ENCODE measurements at regions of chr2 and their contacts with region 1.

Region 1: GRCh38 chr2:44392338-44392943 is 30.7 kb downstream of the CAMKMT start:
- DNase-seq: peak; percentile 6
- ATAC-seq: no peak
- H3K4me3 ChIP-seq: no peak overlapping the region
- H3K27ac ChIP-seq: no peak overlapping the region
- H3K4me1 ChIP-seq: no peaks in the 10 kb centered on the region
- H3K27me3 ChIP-seq: no peaks in the 10 kb centered on the region
- CTCF ChIP-seq: peak; percentile 56 to 79 (median 62)
- POLR2A ChIP-seq: no peak
- RAD21 ChIP-seq: peak; percentile 57

Region 2: DNA sequence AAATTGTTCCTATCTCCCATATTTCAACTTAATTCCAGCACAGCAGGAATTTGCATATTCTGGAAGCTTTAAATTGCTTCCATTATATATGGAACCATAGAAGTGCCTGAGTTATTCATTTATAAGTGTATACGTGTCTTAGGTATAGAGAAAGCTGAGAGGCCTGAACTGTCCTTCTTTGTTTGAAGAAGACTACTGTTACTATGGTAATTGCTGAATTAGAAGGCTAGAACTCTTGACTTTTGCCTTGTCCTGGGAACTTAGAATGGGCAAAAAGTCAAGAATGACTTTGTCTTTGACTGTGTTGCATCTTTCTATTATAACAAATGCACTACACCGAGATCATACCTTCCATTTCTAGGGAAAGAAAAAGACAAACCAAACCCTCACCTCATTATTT is 15.0 kb before region 1 on chr2:
- CTCF ChIA-PET with region 1: interaction called, 11 read pairs
- POLR2A ChIA-PET with region 1: no interaction called
- RAD21 ChIA-PET with region 1: no interaction called
- intact Hi-C with region 1: no loop called
- DNase-seq: no peak
- ATAC-seq: no peak
- H3K4me3 ChIP-seq: no peak overlapping the region
- H3K27ac ChIP-seq: no peak overlapping the region
- H3K4me1 ChIP-seq: no peaks in the 10 kb centered on the region
- H3K27me3 ChIP-seq: no peaks in the 10 kb centered on the region
- CTCF ChIP-seq: no peak
- POLR2A ChIP-seq: no peak
- RAD21 ChIP-seq: no peak

Region 3: DNA sequence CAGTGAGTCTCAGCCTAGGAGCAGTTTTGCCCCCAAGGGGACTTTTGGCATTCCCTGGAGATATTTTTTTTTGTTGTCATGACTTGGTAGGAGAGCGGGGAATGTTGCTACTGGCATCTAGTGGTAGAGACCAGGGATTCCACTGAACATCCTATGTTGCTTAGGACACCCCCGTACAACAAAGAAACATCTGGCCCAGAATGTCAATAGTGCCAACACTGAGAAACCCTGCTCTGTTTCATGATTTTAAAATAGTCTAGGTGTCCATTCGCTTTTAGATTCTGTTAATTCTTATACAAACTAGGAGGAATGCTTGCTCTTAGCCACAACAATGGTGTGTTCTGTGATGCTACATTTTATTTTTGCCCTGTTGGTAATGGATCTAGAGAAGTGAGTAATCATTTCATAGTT is 323.2 kb after region 1 on chr2:
- CTCF ChIA-PET with region 1: interaction called, 16 read pairs
- POLR2A ChIA-PET with region 1: no interaction called
- RAD21 ChIA-PET with region 1: interaction called in 1 of 2 experiments, 3 read pairs
- intact Hi-C with region 1: loop called (anchors 1 kb)
- DNase-seq: peak; percentile 19
- ATAC-seq: peak; percentile 85
- H3K4me3 ChIP-seq: no peak overlapping the region
- H3K27ac ChIP-seq: no peak overlapping the region
- H3K4me1 ChIP-seq: no peaks in the 10 kb centered on the region
- H3K27me3 ChIP-seq: no peaks in the 10 kb centered on the region
- CTCF ChIP-seq: peak; percentile 53 to 66 (median 64)
- POLR2A ChIP-seq: no peak
- RAD21 ChIP-seq: peak; percentile 58

Region 4: GRCh38 chr2:44974064-44974715 is 581.7 kb after region 1 on chr2:
- CTCF ChIA-PET with region 1: interaction called, 5 read pairs
- POLR2A ChIA-PET with region 1: no interaction called
- RAD21 ChIA-PET with region 1: no interaction called
- intact Hi-C with region 1: loop called (anchors 5 kb)
- DNase-seq: peak; percentile 73
- ATAC-seq: peak; percentile 97
- H3K4me3 ChIP-seq: no peak overlapping the region
- H3K27ac ChIP-seq: no peak overlapping the region
- H3K4me1 ChIP-seq: no peaks in the 10 kb centered on the region
- H3K27me3 ChIP-seq: no peaks in the 10 kb centered on the region
- CTCF ChIP-seq: peak; percentile 73 to 90 (median 89); a peak in 5 of 6 replicates
- POLR2A ChIP-seq: no peak
- RAD21 ChIP-seq: peak; percentile 88

Region 5: GRCh38 chr2:45452866-45453265 is 1060.4 kb after region 1 on chr2:
- CTCF ChIA-PET with region 1: no interaction called
- POLR2A ChIA-PET with region 1: no interaction called
- RAD21 ChIA-PET with region 1: no interaction called
- intact Hi-C with region 1: no loop called
- DNase-seq: no peak
- ATAC-seq: no peak
- H3K4me3 ChIP-seq: no peak overlapping the region
- H3K27ac ChIP-seq: no peak overlapping the region
- H3K4me1 ChIP-seq: no peaks in the 10 kb centered on the region
- H3K27me3 ChIP-seq: no peaks in the 10 kb centered on the region
- CTCF ChIP-seq: no peak
- POLR2A ChIP-seq: no peak
- RAD21 ChIP-seq: no peak